ENCODE measurements at regions of chr12 and their contacts with region 1.

Region 1: GRCh38 chr12:120649442-120650232 is 9.2 kb downstream of the CABP1 start:
- DNase-seq: no peak
- ATAC-seq: peak in 1 of 2 experiments; percentile 6; a peak in 3 of 6 replicates
- H3K4me3 ChIP-seq: peak overlapping the region; percentile 29; the same call in 1 of the 3 replicates
- H3K27ac ChIP-seq: peak overlapping the region in 1 of 2 experiments; percentile 87; a peak in 4 of 6 replicates
- H3K4me1 ChIP-seq: peaks cover 16% of the 10 kb centered on the region; the same call in 2 of the 3 replicates
- CTCF ChIP-seq: no peak; the same call in 1 of the 3 replicates
- EP300 ChIP-seq: no peak
- POLR2A ChIP-seq: no peak
- RAD21 ChIP-seq: no peak

Region 2: DNA sequence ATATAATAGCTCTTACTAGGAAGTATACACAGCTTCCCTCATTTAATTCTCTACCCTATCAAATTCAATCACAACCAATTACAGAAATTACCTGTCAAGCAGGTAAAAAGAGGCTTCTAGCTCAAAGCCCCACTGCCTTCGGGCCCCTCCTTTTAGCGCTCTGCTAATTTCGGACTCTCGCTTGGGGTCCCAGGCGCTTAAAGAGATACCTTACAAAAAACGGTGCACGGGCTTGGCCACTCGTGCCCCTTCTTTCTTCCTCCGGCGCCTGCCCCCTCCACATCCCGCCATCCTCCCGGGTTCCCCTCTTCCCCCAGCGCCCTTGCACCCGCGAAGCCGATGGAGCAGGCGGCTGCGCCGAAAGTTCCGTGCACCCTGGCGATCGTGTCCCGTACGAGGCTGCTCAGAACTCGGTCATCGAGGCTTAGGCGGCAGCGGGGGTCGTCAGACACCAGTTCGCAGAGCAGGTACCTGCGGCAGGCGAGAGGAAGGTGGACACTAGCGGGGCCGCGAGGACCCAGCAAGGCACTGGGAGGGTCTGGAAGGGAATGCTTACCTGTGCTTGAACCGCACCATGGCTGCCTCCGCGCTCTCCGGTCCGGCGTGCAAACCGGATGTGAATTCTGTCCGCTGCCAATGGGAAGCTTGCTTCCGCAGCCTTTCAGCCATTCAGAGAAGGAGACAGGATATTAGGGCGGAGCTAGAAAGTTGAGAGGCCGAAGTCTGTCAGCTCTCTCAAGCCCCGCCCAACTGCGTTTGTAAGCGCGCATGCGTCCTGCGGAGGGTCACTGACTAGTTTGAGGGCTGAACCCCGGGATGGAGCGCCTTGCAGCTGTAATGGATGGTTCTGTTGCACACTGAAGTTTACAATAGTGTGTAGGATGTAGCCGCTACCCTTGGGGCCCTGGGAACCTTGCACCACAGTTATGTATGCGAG is 68.6 kb before region 1 on chr12 and contains the start of gene POP5:
- CTCF ChIA-PET with region 1: interaction called, 155 read pairs
- POLR2A ChIA-PET with region 1: interaction called, 6 read pairs
- DNase-seq: peak; percentile 93 to 98
- ATAC-seq: peak; percentile 88 to 95
- H3K4me3 ChIP-seq: peak within 1 kb of the TSS; percentile 82
- H3K27ac ChIP-seq: peak within 1 kb of the TSS; percentile 85 to 86
- H3K4me1 ChIP-seq: peaks cover 7% of the 10 kb centered on the region; the same call in 2 of the 3 replicates
- CTCF ChIP-seq: no peak
- EP300 ChIP-seq: no peak
- POLR2A ChIP-seq: peak; percentile 88
- RAD21 ChIP-seq: no peak; a peak in 1 of 5 replicates
- polyA plus RNA-seq, gene POP5: 111 and 133 TPM in 2 replicates

Region 3: DNA sequence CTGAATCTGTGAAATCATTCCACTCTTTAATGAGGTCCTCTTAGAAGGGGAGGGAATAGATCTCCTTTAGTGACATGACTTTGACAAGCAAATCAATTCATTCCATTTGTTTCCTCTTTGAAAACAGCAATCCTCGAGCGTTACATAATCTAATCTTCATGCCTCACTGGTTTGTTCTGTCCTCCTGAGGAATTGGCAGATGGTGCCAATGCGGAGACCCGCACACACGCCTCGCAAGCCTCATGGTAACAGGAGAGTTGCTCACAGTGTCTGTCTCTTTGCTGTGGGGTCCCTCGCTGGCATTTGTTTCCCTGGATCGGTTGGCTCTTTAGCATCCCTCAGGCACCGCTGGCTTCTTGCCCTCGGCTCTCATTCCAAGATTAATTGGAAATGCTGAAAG is 19.5 kb before region 1 on chr12:
- CTCF ChIA-PET with region 1: interaction called, 34 read pairs
- POLR2A ChIA-PET with region 1: interaction called, 5 read pairs
- DNase-seq: no peak
- ATAC-seq: no peak
- H3K4me3 ChIP-seq: no peak overlapping the region
- H3K27ac ChIP-seq: no peak overlapping the region
- H3K4me1 ChIP-seq: 0 out of 3 replicates have a peak, but pooled peaks cover 3% of the 10 kb centered on the region
- CTCF ChIP-seq: no peak
- EP300 ChIP-seq: no peak
- POLR2A ChIP-seq: no peak
- RAD21 ChIP-seq: no peak

Region 4: DNA sequence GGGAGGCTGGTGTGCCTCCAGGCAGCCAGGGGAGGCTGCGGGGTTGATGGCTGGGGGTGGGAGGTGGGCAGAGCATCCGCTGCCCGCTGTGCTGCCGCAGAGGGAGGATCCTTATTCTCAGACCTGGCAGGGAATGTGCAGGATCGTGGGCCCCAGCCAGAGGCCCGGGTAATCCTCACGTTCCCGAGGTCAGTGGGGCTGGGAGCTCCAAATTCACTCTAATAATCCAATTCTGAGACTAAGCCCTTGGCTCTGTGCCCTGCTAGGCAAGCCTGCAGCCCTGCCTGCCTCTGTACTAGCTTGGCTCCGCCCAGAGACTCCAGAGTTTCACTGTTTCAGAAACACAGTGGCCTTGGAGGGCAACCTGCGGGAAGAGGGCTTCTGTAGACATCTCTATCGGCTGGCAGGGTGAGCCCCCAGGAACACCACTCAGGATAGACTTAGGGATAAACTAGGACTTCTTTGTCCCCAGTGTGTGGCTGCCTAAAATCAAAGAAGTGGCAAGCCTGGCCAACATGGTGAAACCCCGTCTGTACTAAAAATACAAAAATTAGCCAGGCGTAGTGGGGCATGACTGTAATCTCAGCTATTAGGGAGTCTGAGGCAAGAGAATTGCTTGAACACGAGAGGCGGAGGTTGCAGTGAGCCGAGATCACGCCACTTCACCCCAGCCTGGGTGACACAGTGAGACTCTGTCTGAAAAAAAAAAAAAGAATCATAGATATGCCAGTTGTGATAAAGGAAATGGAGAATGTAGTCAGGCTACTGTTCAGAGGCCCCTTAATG is 19.6 kb after region 1 on chr12:
- CTCF ChIA-PET with region 1: interaction called, 127 read pairs
- POLR2A ChIA-PET with region 1: no interaction called
- DNase-seq: no peak
- ATAC-seq: peak; percentile 51 to 68; a peak in 4 of 6 replicates
- H3K4me3 ChIP-seq: no peak overlapping the region
- H3K27ac ChIP-seq: no peak overlapping the region
- H3K4me1 ChIP-seq: 0 out of 3 replicates have a peak, but pooled peaks cover 4% of the 10 kb centered on the region
- CTCF ChIP-seq: no peak
- EP300 ChIP-seq: no peak
- POLR2A ChIP-seq: no peak
- RAD21 ChIP-seq: no peak

Region 5: DNA sequence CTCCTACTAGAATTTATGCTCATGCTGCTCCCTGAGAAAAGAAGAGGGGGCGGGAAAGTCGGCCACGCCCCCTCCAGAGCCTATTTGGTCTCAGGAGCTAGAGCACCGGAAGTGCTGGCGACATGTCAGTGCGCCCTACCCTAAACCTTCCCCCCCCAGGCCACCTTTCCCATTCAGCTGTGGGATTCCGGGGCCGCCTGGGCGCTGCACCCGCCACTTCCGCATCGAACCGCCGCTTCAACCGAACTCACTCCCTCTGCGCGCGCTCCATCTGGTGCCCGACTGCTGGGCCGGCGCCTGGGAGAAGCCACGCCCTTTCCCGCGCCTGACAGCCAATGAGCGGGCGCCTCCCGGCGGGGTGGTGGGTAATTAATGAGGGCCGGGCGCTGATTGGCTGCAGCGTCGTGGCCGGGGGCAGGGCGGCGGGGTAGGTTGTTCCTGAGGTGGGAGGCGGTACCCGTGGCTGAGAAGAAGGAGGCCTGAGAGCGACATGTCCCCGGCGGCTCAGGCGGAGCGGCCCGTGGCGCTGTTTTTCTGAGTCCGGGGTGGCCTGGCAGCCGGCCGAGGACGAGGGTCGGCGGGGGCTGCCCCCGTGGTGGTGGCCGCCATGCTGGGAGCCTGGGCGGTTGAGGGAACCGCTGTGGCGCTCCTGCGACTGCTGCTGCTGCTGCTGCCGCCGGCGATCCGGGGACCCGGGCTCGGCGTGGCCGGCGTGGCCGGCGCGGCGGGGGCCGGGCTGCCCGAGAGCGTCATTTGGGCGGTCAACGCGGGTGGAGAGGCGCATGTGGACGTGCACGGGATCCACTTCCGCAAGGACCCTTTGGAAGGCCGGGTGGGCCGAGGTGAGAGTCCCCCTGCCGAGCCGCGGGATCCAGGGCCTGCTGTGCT is 37.3 kb after region 1 on chr12 and contains the start of gene MLEC:
- CTCF ChIA-PET with region 1: interaction called, 137 read pairs
- POLR2A ChIA-PET with region 1: interaction called, 4 read pairs
- DNase-seq: peak; percentile 98 to 99
- ATAC-seq: peak; percentile 89 to 91
- H3K4me3 ChIP-seq: peak within 1 kb of the TSS; percentile 97
- H3K27ac ChIP-seq: peak within 1 kb of the TSS; percentile 92 to 94
- H3K4me1 ChIP-seq: peaks cover 44% of the 10 kb centered on the region
- CTCF ChIP-seq: no peak
- EP300 ChIP-seq: no peak
- POLR2A ChIP-seq: peak; percentile 85
- RAD21 ChIP-seq: peak in 1 of 2 experiments; percentile 40; a peak in 3 of 5 replicates
- polyA plus RNA-seq, gene MLEC: 89.1 and 140 TPM in 2 replicates

Region 6: DNA sequence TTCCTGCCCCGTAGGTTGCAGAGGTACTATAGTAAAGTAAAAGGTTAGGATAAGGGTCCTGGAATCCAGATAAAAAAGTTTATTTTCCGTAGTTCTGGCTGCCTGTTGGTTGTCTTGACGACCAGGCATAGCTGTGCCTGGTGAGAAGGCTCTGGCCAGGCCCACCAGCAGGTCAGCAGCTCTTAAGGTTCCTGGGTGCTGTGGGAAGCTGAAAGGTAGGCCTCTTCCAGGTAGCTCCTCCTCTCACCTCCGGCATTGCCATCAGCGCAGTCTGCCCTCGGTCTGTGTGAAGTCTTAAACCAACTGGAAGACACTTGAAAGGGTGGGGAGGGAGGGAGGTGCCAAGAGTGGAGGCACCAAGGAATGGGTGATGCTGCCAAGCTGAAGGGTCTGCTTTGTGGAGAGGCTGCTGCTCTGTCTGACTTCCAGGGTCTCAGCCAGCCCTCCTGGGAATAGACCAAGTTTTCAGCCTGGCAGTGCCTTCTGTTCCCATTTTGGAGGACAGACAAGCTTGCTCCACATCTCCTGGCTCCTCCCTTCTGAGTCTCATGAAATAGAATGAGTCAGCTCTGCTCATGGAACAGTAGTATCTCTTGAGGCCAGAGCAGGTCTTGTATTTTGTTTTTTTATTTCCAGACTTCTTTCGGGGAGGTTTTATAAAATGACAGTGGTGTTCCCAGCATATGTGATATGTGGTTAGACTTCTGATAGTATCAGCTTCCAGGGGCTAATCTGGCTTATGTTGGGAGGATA is 70.8 kb after region 1 on chr12:
- CTCF ChIA-PET with region 1: interaction called, 33 read pairs
- POLR2A ChIA-PET with region 1: interaction called, 3 read pairs
- DNase-seq: peak in 1 of 2 experiments; percentile 24
- ATAC-seq: peak; percentile 54 to 68; a peak in 5 of 6 replicates
- H3K4me3 ChIP-seq: no peak overlapping the region
- H3K27ac ChIP-seq: peak overlapping the region in 1 of 2 experiments; percentile 48; a peak in 1 of 6 replicates
- H3K4me1 ChIP-seq: peaks cover 17% of the 10 kb centered on the region
- CTCF ChIP-seq: no peak
- EP300 ChIP-seq: no peak
- POLR2A ChIP-seq: no peak
- RAD21 ChIP-seq: no peak

Region 7: GRCh38 chr12:120760413-120761254 is 111.0 kb after region 1 on chr12:
- CTCF ChIA-PET with region 1: no interaction called
- POLR2A ChIA-PET with region 1: no interaction called
- DNase-seq: no peak
- ATAC-seq: no peak
- H3K4me3 ChIP-seq: no peak overlapping the region
- H3K27ac ChIP-seq: no peak overlapping the region
- H3K4me1 ChIP-seq: no peaks in the 10 kb centered on the region
- CTCF ChIP-seq: no peak
- EP300 ChIP-seq: no peak
- POLR2A ChIP-seq: no peak
- RAD21 ChIP-seq: no peak

Region 8: DNA sequence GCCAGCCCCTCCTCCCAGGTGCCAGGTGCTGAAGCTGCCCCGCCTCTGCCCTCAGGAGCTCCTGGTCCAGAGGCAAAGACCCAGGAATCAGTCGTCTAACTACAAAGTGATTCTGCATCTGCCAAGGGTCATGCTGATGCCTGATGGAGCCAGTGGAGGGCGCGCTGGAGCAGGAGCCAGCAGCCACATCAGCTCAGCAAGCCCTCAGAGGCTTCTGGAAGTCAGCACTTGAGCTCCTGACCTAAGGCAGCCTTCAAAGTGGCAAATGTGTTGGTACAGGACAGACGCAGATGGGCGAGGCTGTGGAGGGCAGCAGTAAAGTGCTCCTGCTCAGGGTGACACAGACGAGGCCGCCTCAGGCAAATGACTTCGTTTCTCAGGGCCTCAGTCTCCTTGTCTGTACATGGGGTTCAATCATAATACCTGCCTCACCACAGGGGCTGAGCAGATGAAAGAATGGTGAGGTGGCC is 355.7 kb after region 1 on chr12:
- CTCF ChIA-PET with region 1: interaction called, 10 read pairs
- POLR2A ChIA-PET with region 1: no interaction called
- DNase-seq: peak in 1 of 2 experiments; percentile 79
- ATAC-seq: peak; percentile 55 to 70; a peak in 4 of 6 replicates
- H3K4me3 ChIP-seq: no peak overlapping the region
- H3K27ac ChIP-seq: no peak overlapping the region
- H3K4me1 ChIP-seq: peaks cover 4% of the 10 kb centered on the region; the same call in 2 of the 3 replicates
- CTCF ChIP-seq: peak; percentile 68
- EP300 ChIP-seq: no peak
- POLR2A ChIP-seq: no peak
- RAD21 ChIP-seq: peak; percentile 56 to 62

Measured in A549 (cell line).